MCF 10A (cell line): ENCODE measurements at regions of chr2 and their contacts with region 1.

Region 1: GRCh38 chr2:173159794-173160463 is 84.3 kb downstream of the MAP3K20 start:
- DNase-seq: peak; percentile 100
- H3K4me3 Mint-ChIP-seq: peak overlapping the region; percentile 68
- H3K27ac Mint-ChIP-seq: peak overlapping the region; percentile 93
- H3K4me1 Mint-ChIP-seq: peaks cover 46% of the 10 kb centered on the region
- H3K27me3 Mint-ChIP-seq: no peaks in the 10 kb centered on the region
- CTCF ChIP-seq: no peak

Region 2: DNA sequence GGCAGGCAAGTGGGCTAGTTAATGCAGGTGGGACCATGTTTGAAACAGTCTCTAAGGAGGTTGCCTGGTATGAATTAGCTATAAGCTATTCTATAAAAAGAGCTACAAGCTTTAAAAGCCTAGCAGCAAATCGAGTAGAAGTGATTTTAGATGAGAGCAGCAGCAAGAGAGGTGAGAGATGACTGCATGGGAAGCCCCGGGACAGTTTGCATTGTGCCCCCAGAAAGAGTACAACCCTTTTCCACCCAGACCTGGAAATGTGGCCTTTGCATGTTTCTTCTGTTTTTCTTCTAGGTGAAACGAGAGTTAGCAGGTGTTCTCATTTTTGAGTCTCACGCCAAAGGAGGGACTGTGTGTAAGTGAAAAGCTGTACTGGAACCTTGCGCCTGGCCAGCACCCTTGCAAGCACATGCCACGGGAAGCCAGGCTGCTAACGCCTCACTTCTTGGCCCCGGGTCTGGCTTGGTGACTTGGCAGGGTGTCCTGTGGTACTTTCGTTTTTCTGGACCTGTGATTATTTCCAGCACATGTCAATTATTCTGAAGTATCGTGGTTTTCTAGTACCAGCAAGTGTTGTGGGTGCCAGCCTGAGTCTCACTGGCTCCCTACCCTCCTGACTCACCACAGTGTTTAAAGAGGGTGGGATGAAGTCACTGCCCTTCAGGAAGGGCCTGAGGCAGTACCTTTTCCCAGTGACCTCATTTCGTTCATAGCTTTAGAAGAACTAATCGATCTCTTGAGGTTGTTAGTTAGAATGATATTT is 174.6 kb before region 1 on chr2:
- CTCF ChIA-PET with region 1: no interaction called
- POLR2A ChIA-PET with region 1: no interaction called
- intact Hi-C with region 1: no loop called
- DNase-seq: peak; percentile 83
- H3K4me3 Mint-ChIP-seq: peak overlapping the region; percentile 65
- H3K27ac Mint-ChIP-seq: peak overlapping the region; percentile 64
- H3K4me1 Mint-ChIP-seq: peaks cover 13% of the 10 kb centered on the region
- H3K27me3 Mint-ChIP-seq: peaks cover 5% of the 10 kb centered on the region
- CTCF ChIP-seq: no peak

Region 3: DNA sequence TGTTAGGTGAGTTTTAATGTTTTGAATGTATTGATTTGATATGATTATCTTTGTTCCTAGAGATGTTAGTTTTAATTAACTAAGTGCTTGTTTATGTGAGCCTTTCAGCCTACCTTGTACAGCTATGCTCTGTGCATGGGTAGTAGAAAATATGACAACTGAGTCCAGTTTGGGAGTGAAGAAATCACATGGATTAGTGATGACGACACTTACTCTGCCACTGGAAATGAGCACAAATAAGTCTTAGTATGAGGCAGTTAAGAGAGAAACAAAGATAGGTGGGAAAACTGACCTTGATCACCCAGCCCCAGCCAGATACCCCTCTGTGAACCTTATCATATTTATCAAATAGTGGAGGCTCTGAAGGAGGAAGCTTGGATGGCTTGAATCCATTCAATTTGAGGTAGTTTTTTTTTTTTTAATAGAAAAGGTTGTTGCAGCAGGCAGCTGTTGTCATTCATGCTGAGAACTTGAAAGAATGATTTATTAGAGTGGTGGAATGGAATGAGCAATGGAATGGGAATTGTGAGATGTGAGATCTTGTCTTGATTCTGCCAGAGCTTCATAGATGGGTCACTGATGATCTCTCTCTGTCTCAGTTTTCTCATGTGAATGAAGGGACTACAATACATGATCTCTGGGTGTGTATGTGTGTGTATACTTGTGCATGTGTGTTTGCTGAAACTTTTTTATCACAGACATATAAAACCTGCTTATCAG is 12.2 kb after region 1 on chr2:
- CTCF ChIA-PET with region 1: interaction called, 3 read pairs
- POLR2A ChIA-PET with region 1: interaction called, 30 read pairs
- intact Hi-C with region 1: no loop called
- DNase-seq: no peak
- H3K4me3 Mint-ChIP-seq: no peak overlapping the region
- H3K27ac Mint-ChIP-seq: peak overlapping the region; percentile 41
- H3K4me1 Mint-ChIP-seq: peaks cover 26% of the 10 kb centered on the region
- H3K27me3 Mint-ChIP-seq: no peaks in the 10 kb centered on the region
- CTCF ChIP-seq: no peak